PC-9 (cell line): ENCODE measurements at regions of chr4 and their contacts with region 1.

Region 1: GRCh38 chr4:168995537-168996295 is 14.3 kb downstream of the CBR4 start:
- DNase-seq: peak in 1 of 2 experiments; percentile 4
- H3K4me3 ChIP-seq: no peak overlapping the region
- H3K27ac ChIP-seq: no peak overlapping the region
- H3K4me1 ChIP-seq: no peaks in the 10 kb centered on the region
- H3K27me3 ChIP-seq: no peaks in the 10 kb centered on the region
- CTCF ChIP-seq: peak; percentile 33; the same call in 1 of the 2 replicates

Region 2: DNA sequence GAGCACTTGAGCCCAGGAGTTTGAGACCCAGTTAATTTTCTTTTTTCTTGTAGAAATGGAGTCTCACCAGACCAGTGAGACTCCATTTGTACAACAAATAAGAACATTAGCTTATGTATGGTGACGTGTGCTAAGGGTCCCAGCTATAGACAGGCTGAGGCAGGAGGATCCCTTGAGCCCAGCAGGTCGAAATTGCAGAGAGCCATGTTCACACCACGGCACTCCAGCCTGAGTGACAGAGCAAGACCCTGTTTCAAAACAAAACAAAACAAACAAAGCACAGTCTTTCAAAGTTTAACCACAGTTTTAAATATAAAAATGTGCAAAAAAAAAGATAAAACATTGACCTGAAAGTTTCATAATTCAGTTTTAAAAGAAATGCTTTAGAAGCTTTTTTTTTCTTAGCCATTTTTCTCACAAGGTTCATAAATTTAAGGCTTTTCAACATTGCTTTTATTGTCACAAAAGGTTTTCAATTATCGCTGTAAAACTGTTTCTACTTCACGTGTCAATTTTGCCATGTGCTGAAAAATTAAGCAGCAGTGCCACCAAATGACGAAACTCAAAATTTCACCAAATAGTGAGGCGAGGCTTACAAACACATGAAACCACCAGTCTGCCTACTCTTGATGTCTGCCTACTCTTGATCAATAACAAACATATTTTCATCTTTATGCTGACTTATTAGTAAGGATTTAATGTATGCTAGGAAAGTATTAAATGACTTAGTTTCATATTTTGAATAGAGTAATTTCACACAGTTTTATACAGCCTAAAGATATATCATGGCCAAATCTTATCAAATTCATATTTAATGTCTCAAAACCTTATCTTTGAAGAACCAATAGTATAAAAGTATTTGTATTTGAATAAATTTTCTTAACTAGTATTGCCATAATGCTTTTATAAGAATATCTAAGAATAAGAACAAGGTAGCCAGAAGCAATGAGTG is 490.4 kb after region 1 on chr4:
- CTCF ChIA-PET with region 1: no interaction called
- POLR2A ChIA-PET with region 1: no interaction called
- intact Hi-C with region 1: loop called (anchors 1 kb)
- DNase-seq: peak; percentile 43 to 48
- H3K4me3 ChIP-seq: no peak overlapping the region
- H3K27ac ChIP-seq: no peak overlapping the region
- H3K4me1 ChIP-seq: peaks cover 4% of the 10 kb centered on the region; the same call in 1 of the 2 replicates
- H3K27me3 ChIP-seq: no peaks in the 10 kb centered on the region
- CTCF ChIP-seq: peak; percentile 68

Region 3: DNA sequence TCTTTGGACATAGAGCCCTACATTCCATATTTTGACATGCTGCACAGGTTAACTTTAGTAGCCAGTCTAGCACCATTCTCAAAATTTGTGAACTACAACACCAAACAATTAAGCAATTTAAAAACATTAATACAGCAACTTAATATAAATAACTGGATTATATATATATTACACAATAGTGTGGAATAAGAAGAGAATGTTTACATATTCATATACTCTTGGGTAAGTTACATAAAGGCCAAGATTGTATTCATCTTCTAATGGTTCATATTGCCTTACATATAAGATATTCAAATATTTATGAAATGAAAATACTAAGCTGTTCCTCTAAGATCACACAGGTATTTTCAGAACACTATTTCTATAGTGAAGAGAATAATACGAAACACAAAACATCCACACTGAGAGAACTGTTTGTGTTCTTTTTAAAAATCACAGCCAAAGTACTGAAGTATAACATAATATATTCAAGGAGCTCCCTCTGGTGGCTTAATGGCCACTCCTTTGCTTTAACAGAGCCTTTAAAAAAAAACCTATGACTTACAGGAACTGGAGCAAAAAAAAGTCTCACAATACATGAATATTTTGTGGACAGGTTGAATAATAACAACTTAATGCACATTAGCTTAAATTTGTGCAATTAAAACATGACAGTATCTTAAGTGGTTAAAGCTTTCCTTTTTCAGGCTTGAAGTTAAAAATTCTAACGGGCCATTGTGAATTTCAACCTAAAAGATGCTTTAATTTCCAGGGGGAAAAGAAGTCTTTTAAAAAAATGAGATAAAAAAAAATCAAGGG is 570.5 kb after region 1 on chr4:
- CTCF ChIA-PET with region 1: no interaction called
- POLR2A ChIA-PET with region 1: no interaction called
- intact Hi-C with region 1: loop called (anchors 10 kb)
- DNase-seq: peak in 1 of 2 experiments; percentile 18
- H3K4me3 ChIP-seq: no peak overlapping the region
- H3K27ac ChIP-seq: no peak overlapping the region
- H3K4me1 ChIP-seq: no peaks in the 10 kb centered on the region
- H3K27me3 ChIP-seq: no peaks in the 10 kb centered on the region
- CTCF ChIP-seq: peak; percentile 65

Region 4: GRCh38 chr4:169745291-169745690 is 749.6 kb after region 1 on chr4:
- CTCF ChIA-PET with region 1: no interaction called
- POLR2A ChIA-PET with region 1: no interaction called
- intact Hi-C with region 1: loop called (anchors 10 kb)
- DNase-seq: no peak
- H3K4me3 ChIP-seq: no peak overlapping the region
- H3K27ac ChIP-seq: peak overlapping the region; percentile 16; the same call in 1 of the 2 replicates
- H3K4me1 ChIP-seq: peaks cover 18% of the 10 kb centered on the region
- H3K27me3 ChIP-seq: no peaks in the 10 kb centered on the region
- CTCF ChIP-seq: no peak